Naive thymus-derived CD8-positive, alpha-beta T cell (primary cell): ENCODE measurements at regions of chr17 and their contacts with region 1.

Region 1: DNA sequence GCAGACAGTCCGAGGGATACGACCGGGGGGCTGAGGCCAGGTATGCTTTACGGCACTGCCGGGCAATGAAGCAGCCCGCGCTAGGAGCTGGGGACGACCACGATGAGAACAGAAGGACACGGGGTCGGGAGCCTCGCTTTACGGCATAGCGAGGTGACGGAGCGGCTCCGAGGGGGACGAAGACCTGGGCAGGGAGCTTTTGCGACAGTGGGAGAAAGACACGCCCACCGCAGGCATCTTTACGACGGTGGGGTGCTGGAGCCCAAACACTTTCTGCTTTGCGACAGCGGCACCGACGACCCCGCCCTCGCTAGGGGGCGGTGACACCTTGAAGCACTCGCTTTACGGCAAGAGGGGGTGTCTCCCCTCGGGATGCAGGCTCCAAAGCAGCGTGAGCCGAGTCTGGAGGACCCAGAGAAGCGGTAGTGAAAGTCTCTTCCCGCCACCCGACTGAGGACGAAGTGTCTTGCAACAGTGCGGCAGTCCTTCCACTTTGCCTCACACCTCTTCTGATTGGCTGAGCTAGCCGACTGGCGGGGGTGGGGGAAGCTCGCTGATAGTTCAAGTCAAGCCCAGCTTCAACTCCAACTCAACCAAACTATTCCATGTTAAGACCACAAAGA is 350 bp upstream of the NEURL4 start:
- DNase-seq: peak; percentile 89 to 99 (median 95)
- ATAC-seq: peak; percentile 58 to 64
- H3K4me3 Mint-ChIP-seq: peak overlapping the region; percentile 90 to 98 (median 96)
- H3K27ac Mint-ChIP-seq: peak overlapping the region; percentile 94 to 98 (median 98)
- H3K4me1 Mint-ChIP-seq: peaks cover 30 to 53% (median 43%) of the 10 kb centered on the region in 4 donors
- H3K27me3 Mint-ChIP-seq: peaks cover 0 to 2% (median 0%) of the 10 kb centered on the region in 5 donors

Region 2: GRCh38 chr17:7252176-7253043 is 77.1 kb before region 1 on chr17 and contains the start of gene ELP5:
- POLR2A ChIA-PET with region 1: no interaction called
- DNase-seq: peak in 8 of 10 donors; percentile 71 to 99 (median 82)
- ATAC-seq: peak; percentile 57 to 63
- H3K4me3 Mint-ChIP-seq: peak within 1 kb of the TSS; percentile 91 to 98 (median 95)
- H3K27ac Mint-ChIP-seq: peak within 1 kb of the TSS; percentile 90 to 100 (median 100)
- H3K4me1 Mint-ChIP-seq: peaks cover 22 to 51% (median 46%) of the 10 kb centered on the region in 4 donors
- H3K27me3 Mint-ChIP-seq: no peaks in the 10 kb centered on the region
- polyA plus RNA-seq, gene ELP5: 55.5 to 94.0 (median 70.8) TPM

Region 3: GRCh38 chr17:7306911-7307686 is 22.4 kb before region 1 on chr17 and contains the start of gene EIF5A:
- POLR2A ChIA-PET with region 1: interaction called, 168 read pairs
- DNase-seq: peak; percentile 98 to 100 (median 100)
- ATAC-seq: peak; percentile 68 to 70
- H3K4me3 Mint-ChIP-seq: peak within 1 kb of the TSS; percentile 90 to 99 (median 96)
- H3K27ac Mint-ChIP-seq: peak within 1 kb of the TSS; percentile 96 to 100 (median 99)
- H3K4me1 Mint-ChIP-seq: peaks cover 23 to 40% (median 37%) of the 10 kb centered on the region in 4 donors
- H3K27me3 Mint-ChIP-seq: peaks cover 0 to 4% (median 0%) of the 10 kb centered on the region in 5 donors
- polyA plus RNA-seq, gene EIF5A: 209 to 690 (median 643) TPM

Region 4: DNA sequence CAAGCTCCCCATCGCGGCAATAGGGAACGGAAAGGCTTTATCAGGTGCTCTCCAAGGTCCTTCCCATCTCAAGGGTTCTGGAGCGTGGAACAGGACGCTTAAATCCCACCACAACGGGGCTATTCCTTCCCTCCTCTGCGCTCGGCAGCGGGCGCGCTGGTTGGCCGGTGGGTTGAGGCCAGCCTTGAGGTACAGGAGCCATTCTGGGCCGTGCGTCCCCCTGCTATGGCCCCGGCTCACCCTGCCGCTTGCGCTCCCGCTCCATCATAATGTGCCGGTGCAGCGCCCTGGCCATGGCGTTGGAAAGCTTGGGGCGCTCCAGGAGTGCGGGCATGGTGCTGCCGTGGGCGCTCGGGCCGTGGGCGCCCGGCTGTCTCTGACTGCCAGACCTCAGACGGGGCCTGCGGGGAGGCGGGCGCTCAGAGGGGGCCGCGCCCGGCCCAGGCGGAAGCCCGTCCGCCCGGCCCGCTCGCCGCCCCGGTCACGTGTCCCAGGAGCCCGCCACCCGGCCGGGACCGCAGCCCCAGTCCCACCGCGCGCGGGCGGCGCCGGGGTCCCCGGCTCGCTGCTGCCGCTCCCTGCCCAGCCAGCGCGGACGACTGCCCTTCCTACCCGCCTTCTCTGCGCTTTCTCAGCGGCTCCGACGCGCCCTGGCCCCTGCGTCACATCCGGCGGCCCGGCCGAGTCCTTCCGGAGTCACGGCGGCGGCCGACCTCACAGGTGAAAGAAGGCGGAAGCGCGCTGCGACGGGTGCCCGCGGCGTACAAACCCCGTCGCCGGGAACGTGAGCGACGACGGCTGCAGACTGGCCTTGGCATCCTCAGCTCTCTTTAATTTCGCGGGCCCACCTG is 14.5 kb before region 1 on chr17 and contains the start of gene GPS2:
- POLR2A ChIA-PET with region 1: interaction called, 168 read pairs
- DNase-seq: peak; percentile 88 to 95 (median 92)
- ATAC-seq: peak; percentile 83 to 89
- H3K4me3 Mint-ChIP-seq: peak within 1 kb of the TSS; percentile 81 to 97 (median 91)
- H3K27ac Mint-ChIP-seq: peak within 1 kb of the TSS; percentile 88 to 98 (median 96)
- H3K4me1 Mint-ChIP-seq: peaks cover 29 to 65% (median 53%) of the 10 kb centered on the region in 4 donors
- H3K27me3 Mint-ChIP-seq: no peaks in the 10 kb centered on the region
- polyA plus RNA-seq, gene GPS2: 75.7 to 107 (median 98.6) TPM

Region 5: GRCh38 chr17:7344399-7344798 is 14.9 kb after region 1 on chr17:
- POLR2A ChIA-PET with region 1: interaction called, 45 read pairs
- DNase-seq: peak in 1 of 10 donors; percentile 46
- ATAC-seq: no peak
- H3K4me3 Mint-ChIP-seq: no peak overlapping the region
- H3K27ac Mint-ChIP-seq: peak overlapping the region in 6 of 10 donors; percentile 25 to 87 (median 72)
- H3K4me1 Mint-ChIP-seq: peaks cover 14 to 66% (median 35%) of the 10 kb centered on the region in 4 donors
- H3K27me3 Mint-ChIP-seq: no peaks in the 10 kb centered on the region

Region 6: GRCh38 chr17:7383742-7384488 is 54.4 kb after region 1 on chr17:
- POLR2A ChIA-PET with region 1: interaction called, 15 read pairs
- DNase-seq: peak; percentile 65 to 93 (median 82)
- ATAC-seq: peak; percentile 95
- H3K4me3 Mint-ChIP-seq: peak overlapping the region; percentile 77 to 94 (median 86)
- H3K27ac Mint-ChIP-seq: peak overlapping the region; percentile 48 to 97 (median 96)
- H3K4me1 Mint-ChIP-seq: peaks cover 15 to 42% (median 24%) of the 10 kb centered on the region in 4 donors
- H3K27me3 Mint-ChIP-seq: peaks cover 14 to 33% (median 29%) of the 10 kb centered on the region in 5 donors

Region 7: DNA sequence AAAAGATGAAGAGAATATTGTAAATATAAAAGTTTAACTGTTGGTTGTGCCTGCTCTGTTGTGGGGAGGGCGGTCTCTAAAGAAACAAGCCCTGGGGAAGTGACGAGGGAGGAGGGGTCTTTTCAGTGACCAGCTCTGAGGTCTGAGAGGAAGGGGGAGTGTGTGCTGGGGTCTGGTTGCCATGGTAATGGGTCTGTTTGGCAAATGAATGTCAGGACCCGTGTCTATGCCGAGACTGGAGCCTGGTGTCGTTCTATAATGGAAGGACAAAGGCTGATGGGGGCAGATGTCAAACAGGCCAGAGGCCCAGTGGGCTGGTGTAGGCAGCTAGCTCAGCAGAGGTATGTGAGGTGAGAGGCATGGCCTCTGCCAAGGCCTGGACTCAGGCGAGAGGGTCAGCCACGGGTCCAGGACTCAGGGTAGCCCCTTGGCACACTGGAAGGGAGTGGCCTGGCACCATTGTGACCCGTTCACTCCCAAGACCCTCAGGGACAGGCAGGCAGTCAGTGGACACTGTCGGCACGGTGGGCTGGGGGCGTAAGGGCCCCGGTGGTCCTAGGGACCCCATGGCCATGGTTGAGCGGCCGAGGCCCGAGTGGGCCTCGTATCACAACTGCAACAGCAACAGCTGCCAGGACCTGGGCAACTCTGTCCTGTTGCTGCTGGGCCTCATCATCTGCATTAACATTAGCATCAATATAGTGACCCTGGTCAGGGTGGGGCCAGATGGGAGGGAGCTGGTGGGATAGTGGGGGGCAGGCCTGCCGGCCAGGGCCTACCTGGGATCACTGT is 90.5 kb after region 1 on chr17 and contains the start of gene SPEM1:
- POLR2A ChIA-PET with region 1: no interaction called
- DNase-seq: no peak
- ATAC-seq: no peak
- H3K4me3 Mint-ChIP-seq: peak within 1 kb of the TSS in 1 of 10 donors; percentile 10
- H3K27ac Mint-ChIP-seq: no peak within 1 kb of the TSS
- H3K4me1 Mint-ChIP-seq: peaks cover 0 to 5% (median 0%) of the 10 kb centered on the region in 4 donors
- H3K27me3 Mint-ChIP-seq: no peaks in the 10 kb centered on the region
- polyA plus RNA-seq, gene SPEM1: not detected

Region 8: DNA sequence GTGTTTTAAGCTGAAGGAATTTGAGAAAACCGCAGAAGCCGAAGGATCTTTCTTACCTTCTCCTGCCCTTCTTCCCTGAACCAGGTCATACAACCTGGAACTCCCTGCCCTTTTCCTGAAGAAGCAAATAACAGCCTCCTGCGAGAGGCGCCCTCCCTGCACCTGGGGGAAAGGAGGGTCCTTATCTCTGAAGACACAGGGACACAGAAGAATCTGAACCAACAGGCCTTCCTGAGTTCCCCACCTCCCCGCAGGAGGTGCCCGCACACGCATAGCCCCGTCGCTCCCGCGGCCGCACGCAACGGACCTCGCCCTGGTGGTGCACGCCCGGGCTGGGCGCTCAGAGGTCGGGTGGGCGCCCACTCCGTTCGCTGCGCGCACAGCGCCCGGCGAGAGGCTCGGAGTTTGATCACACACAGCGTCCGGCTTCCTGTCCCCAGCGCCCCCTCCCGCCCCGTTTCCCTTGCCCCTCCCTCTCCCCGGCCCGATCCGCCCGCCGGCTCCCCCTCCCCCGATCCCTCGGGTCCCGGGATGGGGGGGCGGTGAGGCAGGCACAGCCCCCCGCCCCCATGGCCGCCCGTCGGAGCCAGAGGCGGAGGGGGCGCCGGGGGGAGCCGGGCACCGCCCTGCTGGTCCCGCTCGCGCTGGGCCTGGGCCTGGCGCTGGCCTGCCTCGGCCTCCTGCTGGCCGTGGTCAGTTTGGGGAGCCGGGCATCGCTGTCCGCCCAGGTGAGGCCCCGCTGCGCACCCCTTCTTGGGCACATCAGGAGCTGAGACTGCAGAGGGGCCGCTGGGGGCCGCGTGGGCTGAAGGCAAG is 219.3 kb after region 1 on chr17 and contains the start of gene TNFSF12:
- POLR2A ChIA-PET with region 1: interaction called, 12 read pairs
- DNase-seq: peak in 8 of 10 donors; percentile 34 to 79 (median 52)
- ATAC-seq: peak; percentile 33 to 71
- H3K4me3 Mint-ChIP-seq: peak within 1 kb of the TSS; percentile 72 to 92 (median 88)
- H3K27ac Mint-ChIP-seq: peak within 1 kb of the TSS; percentile 66 to 96 (median 94)
- H3K4me1 Mint-ChIP-seq: peaks cover 28 to 57% (median 54%) of the 10 kb centered on the region in 4 donors
- H3K27me3 Mint-ChIP-seq: no peaks in the 10 kb centered on the region
- polyA plus RNA-seq, gene TNFSF12: 19.3 to 28.6 (median 25.8) TPM